Heart left ventricle (tissue), 16 donors: ENCODE measurements at regions of chr15 and their contacts with region 1.

Region 1: DNA sequence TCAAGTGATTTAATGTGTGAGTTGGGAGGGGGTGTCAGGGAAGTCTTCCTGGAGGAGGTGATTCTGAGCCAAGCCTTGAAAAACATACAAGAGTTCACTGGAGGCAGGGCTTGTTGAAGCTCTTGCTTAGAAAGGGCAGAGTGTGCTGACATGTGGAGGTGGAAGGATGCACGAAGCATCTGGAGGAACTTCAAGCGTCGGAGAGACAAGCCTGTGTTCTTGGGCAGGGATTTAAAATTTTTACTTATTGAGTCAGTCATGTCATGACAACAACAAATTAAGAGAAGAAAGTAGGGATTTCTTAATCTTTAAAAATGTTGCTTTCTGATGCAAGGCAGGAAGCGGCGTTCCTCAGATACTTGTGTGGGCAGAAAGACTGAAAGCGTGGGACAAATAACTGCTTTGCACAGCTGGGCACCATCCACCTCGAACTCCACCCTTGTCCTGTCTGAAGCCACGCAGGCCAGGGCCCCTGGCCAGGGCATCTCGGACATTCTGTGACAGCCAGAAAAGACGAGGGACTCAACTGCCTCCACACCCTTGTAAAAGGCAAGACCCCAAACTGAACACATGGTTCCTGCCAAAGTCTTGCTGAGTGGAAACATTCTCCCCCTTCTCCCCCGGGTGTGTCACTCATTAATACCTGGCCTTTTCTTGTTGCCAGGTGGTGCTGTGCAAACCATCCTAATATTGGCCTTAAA is 6.9 kb upstream of the IL16 start:
- DNase-seq: peak; percentile 39 to 77 (median 73)
- ATAC-seq: peak; percentile 83 to 92 (median 88)
- H3K4me3 ChIP-seq: no peak overlapping the region
- H3K27ac ChIP-seq: peak overlapping the region in 11 of 12 donors; percentile 7 to 88 (median 62)
- H3K4me1 ChIP-seq: peaks cover 0 to 9% (median 0%) of the 10 kb centered on the region in 12 donors
- H3K27me3 ChIP-seq: peaks cover 0 to 6% (median 0%) of the 10 kb centered on the region in 9 donors
- CTCF ChIP-seq: no peak
- POLR2A ChIP-seq: no peak

Region 2: DNA sequence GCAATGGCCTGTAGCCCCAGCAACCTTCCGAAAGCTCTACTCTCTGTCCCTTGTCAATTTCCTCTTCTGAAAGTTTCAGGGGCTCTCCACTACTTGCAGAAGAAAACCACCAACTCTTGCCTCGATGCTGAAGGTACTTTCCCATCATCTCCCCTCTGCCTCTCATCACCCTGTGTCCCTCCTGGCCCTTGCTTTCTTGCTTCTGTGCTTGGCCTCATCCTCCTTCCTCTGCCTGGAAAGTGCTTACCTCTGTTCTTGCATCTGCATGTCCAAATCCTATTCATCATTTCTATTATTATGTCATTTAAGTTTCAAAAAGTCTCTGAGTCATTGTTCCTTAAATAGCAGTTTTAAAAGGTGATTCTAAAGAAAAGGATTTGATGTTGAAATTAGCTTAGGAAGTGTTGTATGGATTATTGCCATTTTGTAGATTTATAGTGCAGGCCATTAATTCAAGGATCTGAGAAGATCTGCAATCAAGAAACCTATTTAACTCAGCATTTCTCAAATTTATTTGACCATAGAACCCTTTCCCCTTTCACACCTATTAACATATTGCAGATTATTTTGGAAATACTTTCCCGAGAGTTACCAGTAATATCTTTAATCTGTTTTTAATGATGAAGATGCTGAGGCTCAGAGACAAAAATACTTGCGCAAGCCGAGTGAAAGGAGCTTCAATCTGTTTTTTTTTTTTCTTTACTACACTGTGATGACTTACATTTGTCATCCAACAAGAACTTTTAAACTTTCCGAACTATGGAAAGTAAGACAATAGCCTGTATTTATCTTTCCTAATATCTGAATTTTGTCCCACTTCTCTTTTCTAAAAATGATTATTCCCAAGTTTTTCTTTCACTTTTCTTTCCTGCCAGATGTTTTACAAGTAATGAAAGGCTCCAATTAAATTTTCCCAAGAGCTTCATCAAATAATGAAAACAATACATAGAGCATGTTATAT is 77.9 kb before region 1 on chr15:
- intact Hi-C with region 1: no loop called
- DNase-seq: no peak
- ATAC-seq: no peak
- H3K4me3 ChIP-seq: no peak overlapping the region
- H3K27ac ChIP-seq: no peak overlapping the region
- H3K4me1 ChIP-seq: peaks cover 0 to 26% (median 2%) of the 10 kb centered on the region in 12 donors
- H3K27me3 ChIP-seq: no peaks in the 10 kb centered on the region
- CTCF ChIP-seq: no peak
- POLR2A ChIP-seq: no peak

Region 3: DNA sequence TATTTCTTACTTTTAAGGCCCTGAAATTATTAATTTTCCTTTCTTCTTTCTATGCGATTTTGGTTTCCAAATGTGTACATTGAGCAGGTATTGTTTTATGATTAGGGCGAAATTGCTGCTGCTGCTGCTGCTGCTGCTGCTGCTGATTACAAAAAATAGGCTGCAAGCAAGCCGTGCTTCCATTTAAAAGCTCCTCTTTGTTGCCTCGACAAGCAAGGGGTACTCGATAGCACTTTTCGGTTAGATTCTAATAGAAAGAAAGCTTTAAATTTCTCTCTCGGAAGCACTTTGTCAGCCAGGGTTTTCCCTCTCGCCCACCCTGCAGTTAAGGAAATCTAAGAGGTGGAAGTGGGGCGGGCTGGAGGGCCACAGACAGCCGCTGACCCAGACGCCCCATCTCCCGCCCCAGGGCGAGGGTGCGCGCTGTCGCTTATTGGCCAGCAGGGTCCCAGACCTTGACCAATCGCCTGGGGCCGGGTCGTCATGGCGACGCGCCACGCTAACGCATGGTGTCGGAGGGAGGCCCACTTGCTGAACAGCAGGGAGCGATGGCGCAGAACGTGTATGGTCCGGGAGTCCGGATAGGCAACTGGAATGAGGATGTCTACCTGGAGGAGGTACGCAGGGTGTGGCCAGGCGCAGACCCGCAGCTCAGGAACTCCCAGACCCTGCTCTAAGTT is 55.8 kb before region 1 on chr15 and contains the start of gene CFAP161:
- intact Hi-C with region 1: loop called in 1 of 10 experiments (anchors 10 kb)
- DNase-seq: peak; percentile 75 to 92 (median 87)
- ATAC-seq: peak; percentile 83 to 99 (median 93)
- H3K4me3 ChIP-seq: peak within 1 kb of the TSS in 10 of 12 donors; percentile 13 to 53 (median 40)
- H3K27ac ChIP-seq: no peak within 1 kb of the TSS
- H3K4me1 ChIP-seq: peaks cover 0 to 9% (median 0%) of the 10 kb centered on the region in 12 donors
- H3K27me3 ChIP-seq: peaks cover 0 to 18% (median 0%) of the 10 kb centered on the region in 9 donors
- CTCF ChIP-seq: peak in 1 of 12 donors; percentile 4
- POLR2A ChIP-seq: no peak
- total RNA-seq, gene CFAP161: 0.22 to 2.0 (median 0.81) TPM in 8 of 9 donors, not detected in the other

Region 4: DNA sequence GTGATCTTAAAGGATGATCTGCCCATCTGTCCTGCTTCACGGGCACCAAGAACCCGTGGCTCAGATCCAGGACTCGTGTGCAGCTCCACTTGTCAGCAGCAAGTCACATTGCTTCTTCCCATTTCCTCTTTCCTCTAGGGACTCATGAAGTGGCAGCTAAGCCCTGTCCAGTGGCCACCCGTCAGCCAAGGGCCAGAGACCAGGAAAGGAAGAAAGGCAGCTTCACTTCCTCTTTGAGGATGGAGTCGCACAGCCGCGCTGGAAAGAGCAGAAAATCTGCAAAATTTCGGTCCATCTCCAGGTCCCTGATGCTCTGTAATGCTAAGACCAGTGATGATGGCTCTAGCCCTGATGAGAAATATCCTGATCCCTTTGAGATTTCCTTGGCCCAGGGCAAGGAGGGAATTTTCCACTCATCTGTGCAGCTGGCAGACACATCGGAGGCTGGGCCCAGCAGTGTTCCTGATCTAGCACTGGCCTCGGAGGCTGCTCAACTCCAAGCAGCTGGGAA is 35.5 kb after region 1 on chr15:
- intact Hi-C with region 1: loop called in 2 of 10 experiments (anchors 5 kb)
- DNase-seq: peak; percentile 55 to 80 (median 65)
- ATAC-seq: peak; percentile 66 to 78 (median 76)
- H3K4me3 ChIP-seq: no peak overlapping the region
- H3K27ac ChIP-seq: peak overlapping the region; percentile 23 to 85 (median 58)
- H3K4me1 ChIP-seq: peaks cover 0 to 49% (median 16%) of the 10 kb centered on the region in 12 donors
- H3K27me3 ChIP-seq: no peaks in the 10 kb centered on the region
- CTCF ChIP-seq: no peak
- POLR2A ChIP-seq: no peak

Region 5: DNA sequence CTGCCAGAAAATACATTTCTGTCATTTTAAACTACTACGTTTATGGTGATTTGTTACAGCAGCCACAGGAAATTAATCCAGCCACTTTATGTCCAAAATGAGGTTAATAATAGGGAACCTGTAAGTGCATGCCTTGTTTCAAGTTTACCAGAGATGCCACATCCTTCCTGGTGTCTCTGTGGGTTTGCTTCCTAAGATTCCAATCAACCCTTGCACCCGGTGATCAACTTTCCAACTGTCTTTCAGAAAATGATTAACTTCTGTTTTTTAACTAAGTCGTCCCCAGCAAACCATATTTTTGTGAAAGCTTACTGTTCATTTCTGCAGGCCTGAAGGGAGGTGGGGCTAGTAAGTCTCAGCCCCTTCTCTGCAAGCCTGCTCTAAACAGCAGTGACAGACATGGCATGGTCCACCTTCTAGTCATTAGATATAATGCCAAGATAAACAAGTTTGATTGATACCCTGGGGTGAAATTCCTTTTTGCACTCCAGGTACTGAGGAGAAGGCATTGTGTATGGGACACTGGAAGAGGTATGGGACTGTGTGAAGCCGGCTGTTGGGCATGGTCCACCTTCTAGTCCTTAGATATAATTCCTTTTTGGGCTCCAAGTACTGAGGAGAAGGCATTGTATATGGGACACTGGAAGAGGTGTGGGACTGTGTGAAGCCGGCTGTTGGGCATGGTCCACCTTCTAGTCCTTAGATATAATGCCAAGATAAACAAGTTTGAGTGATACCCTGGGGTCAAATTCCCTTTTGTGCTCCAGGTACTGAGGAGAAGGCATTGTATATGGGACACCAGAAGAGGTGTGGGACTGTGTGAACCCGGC is 195.4 kb after region 1 on chr15:
- intact Hi-C with region 1: no loop called
- DNase-seq: no peak
- ATAC-seq: no peak
- H3K4me3 ChIP-seq: no peak overlapping the region
- H3K27ac ChIP-seq: no peak overlapping the region
- H3K4me1 ChIP-seq: no peaks in the 10 kb centered on the region
- H3K27me3 ChIP-seq: no peaks in the 10 kb centered on the region
- CTCF ChIP-seq: no peak
- POLR2A ChIP-seq: no peak

Region 6: GRCh38 chr15:81531109-81531592 is 341.4 kb after region 1 on chr15:
- intact Hi-C with region 1: no loop called
- DNase-seq: peak in 2 of 5 donors; percentile 14 to 27
- ATAC-seq: peak in 3 of 4 donors; percentile 41 to 50 (median 46)
- H3K4me3 ChIP-seq: no peak overlapping the region
- H3K27ac ChIP-seq: no peak overlapping the region
- H3K4me1 ChIP-seq: peaks cover 0 to 21% (median 10%) of the 10 kb centered on the region in 12 donors
- H3K27me3 ChIP-seq: no peaks in the 10 kb centered on the region
- CTCF ChIP-seq: no peak
- POLR2A ChIP-seq: no peak